ENCODE measurements at regions of chr9 and their contacts with region 1.

Region 1: DNA sequence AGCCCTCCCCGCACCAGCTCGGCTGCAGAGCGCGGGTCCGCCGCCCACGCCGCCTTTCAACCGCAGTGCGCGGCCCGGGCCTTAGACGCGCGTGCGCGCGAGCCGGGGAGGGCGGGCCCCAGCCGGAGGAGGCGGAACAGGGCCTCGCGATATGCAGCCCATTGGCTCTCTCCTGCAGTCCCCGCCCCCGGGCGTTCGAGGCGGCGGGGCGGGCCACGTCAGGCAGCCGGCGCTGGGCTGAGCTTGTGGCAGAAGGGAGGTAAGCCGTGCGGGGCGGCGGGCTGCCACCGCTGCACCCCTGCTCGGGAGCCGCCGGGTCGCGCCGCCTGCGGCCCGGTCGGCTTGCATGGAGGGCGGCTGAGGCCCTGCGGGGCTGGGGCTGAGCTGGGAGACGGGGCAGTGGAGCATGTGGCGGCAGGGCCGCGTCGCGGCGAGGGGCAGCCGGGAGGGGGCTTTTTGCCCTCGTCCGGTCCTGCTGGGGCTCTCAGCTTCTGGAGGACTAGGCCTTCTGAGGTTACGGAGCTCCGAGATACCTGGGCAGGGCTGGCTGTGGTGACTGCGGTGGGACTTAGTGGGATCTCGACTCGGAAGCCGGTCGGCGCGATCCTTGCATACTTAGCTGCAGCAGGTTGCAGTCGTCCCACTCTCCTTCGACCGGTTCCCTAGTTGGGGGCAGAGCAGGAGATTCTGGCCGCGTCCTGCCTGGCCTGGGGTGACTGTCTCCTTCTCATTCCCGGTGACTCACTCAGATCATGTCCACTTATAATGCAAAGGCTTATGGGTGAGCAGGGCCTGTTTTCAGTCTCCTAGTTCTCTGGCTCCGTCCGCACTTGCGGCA is at the start of gene FOCAD:
- DNase-seq: peak; percentile 96
- ATAC-seq: peak; percentile 99
- H3K4me3 ChIP-seq: peak within 1 kb of the TSS; percentile 71 to 92 (median 83)
- H3K4me3 Mint-ChIP-seq: peak within 1 kb of the TSS; percentile 95
- H3K27ac ChIP-seq: peak within 1 kb of the TSS; percentile 20 to 70
- H3K27ac Mint-ChIP-seq: peak within 1 kb of the TSS; percentile 48
- H3K4me1 ChIP-seq: peaks cover 15 to 17% of the 10 kb centered on the region in 2 donors
- H3K4me1 Mint-ChIP-seq: peaks cover 17% of the 10 kb centered on the region
- H3K27me3 ChIP-seq: no peaks in the 10 kb centered on the region
- H3K27me3 Mint-ChIP-seq: no peaks in the 10 kb centered on the region
- CTCF ChIP-seq: no peak
- total RNA-seq, gene FOCAD: 10.1 and 13.8 TPM in 2 replicates

Region 2: GRCh38 chr9:19408693-19409400 is 1275.4 kb before region 1 on chr9 and contains the start of gene ACER2:
- CTCF ChIA-PET with region 1: no interaction called
- POLR2A ChIA-PET with region 1: no interaction called
- intact Hi-C with region 1: loop called (anchors 5 kb)
- DNase-seq: peak; percentile 92
- ATAC-seq: peak; percentile 97
- H3K4me3 ChIP-seq: peak within 1 kb of the TSS; percentile 77 to 94 (median 92)
- H3K4me3 Mint-ChIP-seq: peak within 1 kb of the TSS; percentile 94
- H3K27ac ChIP-seq: peak within 1 kb of the TSS; percentile 31 to 51
- H3K27ac Mint-ChIP-seq: peak within 1 kb of the TSS; percentile 86
- H3K4me1 ChIP-seq: peaks cover 12 to 15% of the 10 kb centered on the region in 2 donors
- H3K4me1 Mint-ChIP-seq: peaks cover 12% of the 10 kb centered on the region
- H3K27me3 ChIP-seq: no peaks in the 10 kb centered on the region
- H3K27me3 Mint-ChIP-seq: no peaks in the 10 kb centered on the region
- CTCF ChIP-seq: no peak
- total RNA-seq, gene ACER2: 5.5 and 6.1 TPM in 2 replicates

Region 3: GRCh38 chr9:20640331-20641187 is 43.7 kb before region 1 on chr9:
- CTCF ChIA-PET with region 1: no interaction called
- POLR2A ChIA-PET with region 1: no interaction called
- intact Hi-C with region 1: loop called (anchors 5 kb)
- DNase-seq: peak; percentile 63
- ATAC-seq: peak; percentile 77
- H3K4me3 ChIP-seq: no peak overlapping the region
- H3K4me3 Mint-ChIP-seq: no peak overlapping the region
- H3K27ac ChIP-seq: no peak overlapping the region
- H3K27ac Mint-ChIP-seq: no peak overlapping the region
- H3K4me1 ChIP-seq: peaks cover 6 to 8% of the 10 kb centered on the region in 2 donors
- H3K4me1 Mint-ChIP-seq: peaks cover 8% of the 10 kb centered on the region
- H3K27me3 ChIP-seq: peaks cover 0 to 29% (median 11%) of the 10 kb centered on the region in 4 experiments
- H3K27me3 Mint-ChIP-seq: peaks cover 44% of the 10 kb centered on the region
- CTCF ChIP-seq: no peak

Region 4: GRCh38 chr9:20701060-20701459 is 16.8 kb after region 1 on chr9:
- CTCF ChIA-PET with region 1: no interaction called
- POLR2A ChIA-PET with region 1: no interaction called
- intact Hi-C with region 1: no loop called
- DNase-seq: no peak
- ATAC-seq: no peak
- H3K4me3 ChIP-seq: no peak overlapping the region
- H3K4me3 Mint-ChIP-seq: no peak overlapping the region
- H3K27ac ChIP-seq: no peak overlapping the region
- H3K27ac Mint-ChIP-seq: no peak overlapping the region
- H3K4me1 ChIP-seq: no peaks in the 10 kb centered on the region
- H3K4me1 Mint-ChIP-seq: no peaks in the 10 kb centered on the region
- H3K27me3 ChIP-seq: no peaks in the 10 kb centered on the region
- H3K27me3 Mint-ChIP-seq: no peaks in the 10 kb centered on the region
- CTCF ChIP-seq: no peak

Region 5: GRCh38 chr9:20744036-20744630 is 59.9 kb after region 1 on chr9:
- CTCF ChIA-PET with region 1: interaction called, 3 read pairs
- POLR2A ChIA-PET with region 1: interaction called, 3 read pairs
- intact Hi-C with region 1: loop called (anchors 10 kb)
- DNase-seq: no peak
- ATAC-seq: no peak
- H3K4me3 ChIP-seq: no peak overlapping the region
- H3K4me3 Mint-ChIP-seq: no peak overlapping the region
- H3K27ac ChIP-seq: no peak overlapping the region
- H3K27ac Mint-ChIP-seq: no peak overlapping the region
- H3K4me1 ChIP-seq: no peaks in the 10 kb centered on the region
- H3K4me1 Mint-ChIP-seq: no peaks in the 10 kb centered on the region
- H3K27me3 ChIP-seq: no peaks in the 10 kb centered on the region
- H3K27me3 Mint-ChIP-seq: no peaks in the 10 kb centered on the region
- CTCF ChIP-seq: no peak

Region 6: DNA sequence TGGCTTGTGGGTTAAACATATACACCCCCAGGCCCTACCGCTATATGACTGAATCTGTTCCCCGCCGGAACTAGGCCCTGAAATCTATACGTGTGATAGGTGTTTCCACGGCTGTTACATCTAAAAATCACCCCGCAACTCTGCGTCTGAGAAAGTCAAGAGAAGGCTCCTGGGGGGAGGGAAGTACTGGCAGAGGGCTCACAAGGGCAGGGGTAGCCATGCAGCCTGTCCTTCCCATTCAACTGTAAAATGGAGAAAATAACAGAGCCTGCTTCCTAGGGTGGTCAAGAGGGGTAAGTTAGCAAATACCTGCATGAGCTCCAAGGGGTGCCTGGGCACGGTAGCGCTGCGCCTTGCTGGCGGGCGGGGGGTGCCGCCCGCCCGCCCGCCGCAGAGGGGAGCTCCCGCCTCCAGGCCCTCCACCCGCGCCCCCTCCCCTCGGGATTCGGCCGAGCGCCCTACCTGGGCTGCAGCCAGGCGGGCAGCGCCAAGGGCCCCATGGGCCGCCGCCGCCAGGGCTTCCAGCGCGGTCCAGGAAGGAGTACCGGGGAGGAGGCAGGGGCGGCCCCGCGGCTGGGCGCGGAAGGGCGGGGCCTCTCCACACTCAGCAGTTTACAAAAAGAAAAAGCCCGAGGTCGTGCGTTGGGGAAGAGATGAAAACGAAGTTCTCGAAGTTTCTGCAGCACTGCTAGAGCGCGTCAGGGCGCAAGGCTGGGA is 347.0 kb after region 1 on chr9 and contains the start of gene HACD4:
- CTCF ChIA-PET with region 1: no interaction called
- POLR2A ChIA-PET with region 1: no interaction called
- intact Hi-C with region 1: loop called (anchors 10 kb)
- DNase-seq: peak; percentile 61
- ATAC-seq: peak; percentile 83
- H3K4me3 ChIP-seq: peak within 1 kb of the TSS; percentile 56 to 79 (median 64)
- H3K4me3 Mint-ChIP-seq: peak within 1 kb of the TSS; percentile 82
- H3K27ac ChIP-seq: peak within 1 kb of the TSS; percentile 79 to 85
- H3K27ac Mint-ChIP-seq: peak within 1 kb of the TSS; percentile 79
- H3K4me1 ChIP-seq: peaks cover 11 to 13% of the 10 kb centered on the region in 2 donors
- H3K4me1 Mint-ChIP-seq: peaks cover 6% of the 10 kb centered on the region
- H3K27me3 ChIP-seq: no peaks in the 10 kb centered on the region
- H3K27me3 Mint-ChIP-seq: no peaks in the 10 kb centered on the region
- CTCF ChIP-seq: no peak
- total RNA-seq, gene HACD4: 3.9 and 5.7 TPM in 2 replicates